ENCODE measurements at regions of chr20 and their contacts with region 1.

Region 1: DNA sequence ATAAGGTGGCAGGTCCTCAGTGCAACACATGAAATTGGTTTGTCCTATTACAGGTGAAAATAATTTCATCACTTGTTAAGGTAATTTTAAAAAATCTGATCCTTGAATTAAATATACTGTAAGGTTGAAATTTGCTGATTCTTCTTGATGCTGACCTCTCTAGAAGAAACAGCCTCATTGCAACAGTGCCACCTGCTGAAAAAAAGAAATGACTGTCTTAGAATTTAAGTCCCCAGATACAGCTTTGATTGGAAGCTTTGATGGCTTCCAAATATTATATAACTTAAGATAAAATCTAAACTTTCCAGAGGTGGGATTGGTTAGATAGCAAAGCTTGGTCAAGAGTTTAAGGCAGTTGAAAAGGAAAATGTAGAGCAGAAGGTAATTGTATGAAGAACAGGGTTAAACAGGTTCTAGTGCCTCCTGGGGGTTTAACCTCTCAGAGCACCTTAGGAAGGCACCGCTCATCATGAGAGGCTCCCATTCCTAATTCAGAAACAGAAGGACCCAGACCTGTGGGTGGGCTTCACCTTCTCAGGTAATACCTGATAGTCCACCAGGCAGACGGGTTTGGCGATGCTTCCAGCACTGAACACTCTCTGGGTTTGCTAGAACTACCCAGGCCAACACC is 401.0 kb downstream of the PAX1 start:
- DNase-seq: no peak
- H3K4me3 ChIP-seq: no peak overlapping the region
- H3K27ac ChIP-seq: no peak overlapping the region
- H3K4me1 ChIP-seq: no peaks in the 10 kb centered on the region
- H3K27me3 ChIP-seq: peaks cover 0 to 2% (median 0%) of the 10 kb centered on the region in 3 donors
- CTCF ChIP-seq: peak in 3 of 4 experiments; percentile 39 to 61 (median 52)
- EP300 ChIP-seq: no peak
- POLR2A ChIP-seq: no peak

Region 2: GRCh38 chr20:21702553-21703470 is 403.6 kb before region 1 on chr20:
- intact Hi-C with region 1: loop called (anchors 5 kb)
- DNase-seq: peak; percentile 80
- H3K4me3 ChIP-seq: peak overlapping the region in 3 of 4 donors; percentile 10 to 21 (median 16)
- H3K27ac ChIP-seq: no peak overlapping the region
- H3K4me1 ChIP-seq: peaks cover 0 to 33% (median 28%) of the 10 kb centered on the region in 4 donors
- H3K27me3 ChIP-seq: peaks cover 54 to 100% (median 88%) of the 10 kb centered on the region in 3 donors
- CTCF ChIP-seq: peak; percentile 26 to 54 (median 38)
- EP300 ChIP-seq: no peak
- POLR2A ChIP-seq: no peak

Region 3: DNA sequence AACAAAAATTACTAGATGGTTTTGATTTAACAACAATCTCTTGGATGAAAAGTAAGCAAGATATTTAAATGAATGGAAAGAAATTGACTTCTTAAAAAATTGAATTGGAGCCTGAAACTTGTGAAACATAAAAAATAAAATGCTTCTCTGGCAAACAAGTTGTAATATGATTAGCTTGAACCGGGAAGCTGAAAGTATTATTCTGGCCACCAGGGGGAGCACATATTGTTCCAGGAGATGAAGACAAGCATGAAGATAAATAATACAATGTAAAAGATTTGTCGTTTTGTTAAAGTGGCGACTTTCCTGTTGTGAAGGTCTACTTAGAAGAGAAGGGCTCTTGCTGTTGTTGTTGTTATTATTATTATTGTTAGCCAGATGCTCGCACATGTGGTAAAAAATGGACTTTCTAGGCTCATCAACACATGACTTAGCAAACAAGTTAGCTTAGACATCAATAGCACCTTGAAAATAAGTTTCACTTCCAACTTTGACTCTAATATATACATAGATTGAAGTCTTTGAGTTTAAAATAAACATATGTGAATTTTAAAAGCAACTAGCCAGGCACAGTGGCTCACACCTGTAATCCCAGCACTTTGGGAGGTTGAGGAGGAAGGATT is 386.7 kb before region 1 on chr20:
- intact Hi-C with region 1: loop called (anchors 1 kb)
- DNase-seq: peak; percentile 82
- H3K4me3 ChIP-seq: no peak overlapping the region
- H3K27ac ChIP-seq: no peak overlapping the region
- H3K4me1 ChIP-seq: peaks cover 0 to 2% (median 0%) of the 10 kb centered on the region in 4 donors
- H3K27me3 ChIP-seq: peaks cover 14 to 40% (median 30%) of the 10 kb centered on the region in 3 donors
- CTCF ChIP-seq: peak; percentile 41 to 79 (median 60)
- EP300 ChIP-seq: no peak
- POLR2A ChIP-seq: no peak

Region 4: DNA sequence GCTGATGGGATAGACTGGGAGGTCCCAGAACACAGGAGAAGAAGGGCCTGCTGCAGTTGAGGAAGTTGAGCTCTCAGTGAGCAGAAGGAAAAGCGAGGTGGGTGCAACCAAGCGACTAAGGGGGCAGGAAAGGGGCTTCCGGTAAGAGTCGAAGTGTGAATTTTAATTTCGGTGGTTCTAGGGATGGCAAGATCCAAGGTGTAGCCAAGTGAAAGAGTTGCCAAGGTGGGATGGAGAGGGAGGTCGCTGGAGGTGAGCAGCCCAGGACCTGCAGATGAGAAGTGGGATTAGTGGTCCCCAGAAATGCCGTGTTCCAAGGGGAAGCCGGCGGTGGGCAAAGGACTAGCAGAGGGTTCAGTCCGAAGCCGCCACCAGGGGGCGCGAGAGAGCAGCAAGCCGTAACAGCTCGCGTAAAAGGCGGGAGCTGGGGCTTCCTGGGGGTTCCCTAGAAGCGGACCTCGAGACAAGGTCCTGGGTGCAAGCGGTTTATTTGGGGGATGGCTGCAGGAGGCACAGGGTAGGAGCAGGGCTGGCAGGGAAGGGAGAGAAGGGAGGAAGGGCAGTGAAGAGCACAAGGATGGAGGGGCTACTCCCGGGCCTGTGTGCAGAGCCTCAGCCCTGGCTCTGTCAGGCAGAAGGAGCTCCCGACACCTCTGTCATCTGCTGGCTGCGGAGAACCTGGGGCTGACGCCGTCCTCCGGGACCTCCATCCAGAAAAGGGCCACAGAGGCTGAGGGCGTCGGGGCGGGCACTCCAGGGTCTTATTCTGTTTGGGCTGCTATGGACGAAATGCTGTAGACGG is 297.4 kb before region 1 on chr20:
- intact Hi-C with region 1: loop called (anchors 5 kb)
- DNase-seq: no peak
- H3K4me3 ChIP-seq: no peak overlapping the region
- H3K27ac ChIP-seq: no peak overlapping the region
- H3K4me1 ChIP-seq: peaks cover 0 to 20% (median 8%) of the 10 kb centered on the region in 4 donors
- H3K27me3 ChIP-seq: peaks cover 0 to 14% (median 0%) of the 10 kb centered on the region in 3 donors
- CTCF ChIP-seq: peak; percentile 32 to 71 (median 54)
- EP300 ChIP-seq: no peak
- POLR2A ChIP-seq: no peak

Region 5: DNA sequence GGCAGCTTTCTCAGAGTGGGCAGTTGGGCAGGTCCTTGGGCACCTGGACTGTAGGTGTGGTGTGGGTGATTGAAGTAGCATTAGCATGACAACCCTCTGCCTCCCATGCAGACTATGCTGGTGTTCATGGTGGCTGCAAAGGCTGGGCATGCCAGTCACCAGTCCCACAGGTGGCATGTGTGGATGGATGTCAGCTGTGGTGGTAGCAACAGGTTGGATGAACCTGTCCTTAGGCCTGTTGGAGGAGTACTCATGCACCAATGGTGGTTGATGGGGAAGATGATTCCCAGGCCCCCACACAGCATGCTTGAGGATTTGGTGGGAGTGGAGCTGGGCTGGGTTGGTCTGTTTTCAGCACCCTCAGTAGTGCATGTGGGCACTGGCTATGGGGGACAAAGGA is 149.8 kb before region 1 on chr20:
- intact Hi-C with region 1: no loop called
- DNase-seq: no peak
- H3K4me3 ChIP-seq: no peak overlapping the region
- H3K27ac ChIP-seq: no peak overlapping the region
- H3K4me1 ChIP-seq: no peaks in the 10 kb centered on the region
- H3K27me3 ChIP-seq: no peaks in the 10 kb centered on the region
- CTCF ChIP-seq: no peak
- EP300 ChIP-seq: no peak
- POLR2A ChIP-seq: no peak

Region 6: GRCh38 chr20:22312744-22313346 is 206.4 kb after region 1 on chr20:
- intact Hi-C with region 1: loop called (anchors 2 kb)
- DNase-seq: no peak
- H3K4me3 ChIP-seq: no peak overlapping the region
- H3K27ac ChIP-seq: no peak overlapping the region
- H3K4me1 ChIP-seq: no peaks in the 10 kb centered on the region
- H3K27me3 ChIP-seq: peaks cover 0 to 5% (median 0%) of the 10 kb centered on the region in 3 donors
- CTCF ChIP-seq: peak in 3 of 4 experiments; percentile 14 to 66 (median 45)
- EP300 ChIP-seq: no peak
- POLR2A ChIP-seq: no peak